Tibial artery (tissue), 4 donors: ENCODE measurements at regions of chr11 and their contacts with region 1.

Region 1: DNA sequence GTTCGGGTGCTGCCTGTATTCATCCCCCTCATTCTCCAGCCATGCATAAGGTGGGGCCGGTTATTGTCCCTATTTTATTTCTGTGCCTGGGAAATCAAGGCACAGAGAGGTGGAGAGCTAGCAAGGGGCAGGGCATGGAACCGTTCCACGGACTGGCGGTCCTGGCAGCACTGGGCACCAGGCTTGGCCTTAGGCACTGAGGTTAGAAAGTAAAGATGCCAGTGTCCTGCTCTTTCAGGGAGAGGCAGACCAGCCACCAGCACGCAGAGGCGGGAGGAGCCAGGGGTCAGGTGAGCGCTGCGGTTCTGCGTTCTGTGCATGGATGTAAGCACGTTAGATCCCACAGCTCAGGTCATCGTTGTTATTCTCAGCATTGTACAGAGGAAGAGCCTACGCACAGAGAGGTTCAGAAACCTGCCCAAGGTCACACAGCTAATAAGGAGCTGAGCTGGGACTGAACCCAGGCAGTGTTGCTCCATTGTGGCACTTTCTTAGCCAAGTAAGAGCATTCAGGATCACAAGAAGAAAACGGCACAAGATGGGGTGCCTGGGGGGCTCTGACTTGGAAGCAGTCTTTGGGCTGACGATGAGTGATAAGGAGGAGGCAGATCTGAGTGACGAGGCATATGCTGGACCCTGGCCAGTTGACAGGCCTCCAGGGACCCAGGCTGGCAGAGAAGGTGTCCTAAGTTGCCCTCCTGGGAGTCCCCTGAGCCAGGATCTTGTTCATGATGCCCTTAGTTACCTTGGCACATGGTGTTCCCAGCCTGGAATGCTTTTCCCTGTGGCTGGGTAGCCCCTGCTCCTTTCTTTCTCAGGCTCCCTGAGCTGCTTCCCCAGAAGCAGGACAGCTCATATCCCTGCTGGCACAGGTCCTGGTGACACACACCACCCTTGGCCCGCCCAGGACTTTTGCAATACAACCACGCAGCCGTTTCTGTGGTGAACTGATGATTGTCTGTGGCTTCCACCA is 41.1 kb downstream of the OSBPL5 start:
- DNase-seq: peak; percentile 97 to 98
- H3K4me3 ChIP-seq: no peak overlapping the region
- H3K27ac ChIP-seq: peak overlapping the region; percentile 75 to 80
- H3K4me1 ChIP-seq: peaks cover 5 to 42% (median 30%) of the 10 kb centered on the region in 4 donors
- H3K27me3 ChIP-seq: no peaks in the 10 kb centered on the region
- CTCF ChIP-seq: no peak

Region 2: GRCh38 chr11:2930704-2931428 is 193.2 kb before region 1 on chr11:
- intact Hi-C with region 1: no loop called
- DNase-seq: peak; percentile 57 to 78
- H3K4me3 ChIP-seq: peak overlapping the region; percentile 53 to 75
- H3K27ac ChIP-seq: peak overlapping the region; percentile 51 to 67
- H3K4me1 ChIP-seq: peaks cover 0 to 51% (median 32%) of the 10 kb centered on the region in 4 donors
- H3K27me3 ChIP-seq: peaks cover 0 to 17% of the 10 kb centered on the region in 2 donors
- CTCF ChIP-seq: peak in 1 of 2 experiments; percentile 45

Region 3: GRCh38 chr11:3146612-3147256 is 22.7 kb after region 1 on chr11:
- intact Hi-C with region 1: loop called (anchors 1 kb)
- DNase-seq: peak; percentile 59 to 85
- H3K4me3 ChIP-seq: peak overlapping the region; percentile 5 to 11
- H3K27ac ChIP-seq: peak overlapping the region; percentile 87 to 93
- H3K4me1 ChIP-seq: peaks cover 24 to 70% (median 68%) of the 10 kb centered on the region in 4 donors
- H3K27me3 ChIP-seq: no peaks in the 10 kb centered on the region
- CTCF ChIP-seq: no peak

Region 4: GRCh38 chr11:3160252-3161031 is 36.4 kb after region 1 on chr11:
- intact Hi-C with region 1: loop called (anchors 5 kb)
- DNase-seq: peak; percentile 95 to 96
- H3K4me3 ChIP-seq: peak overlapping the region; percentile 58 to 60
- H3K27ac ChIP-seq: peak overlapping the region; percentile 90 to 93
- H3K4me1 ChIP-seq: peaks cover 12 to 88% (median 72%) of the 10 kb centered on the region in 4 donors
- H3K27me3 ChIP-seq: no peaks in the 10 kb centered on the region
- CTCF ChIP-seq: no peak